CD8-positive, alpha-beta T cell (primary cell): ENCODE measurements at regions of chr18 and their contacts with region 1.

Region 1: GRCh38 chr18:11908182-11909060 is at the start of gene MPPE1:
- DNase-seq: peak; percentile 69 to 93 (median 84)
- ATAC-seq: peak; percentile 90
- H3K4me3 ChIP-seq: peak within 1 kb of the TSS; percentile 85 to 100
- H3K4me3 Mint-ChIP-seq: peak within 1 kb of the TSS; percentile 96
- H3K27ac ChIP-seq: peak within 1 kb of the TSS; percentile 92 to 95
- H3K27ac Mint-ChIP-seq: peak within 1 kb of the TSS; percentile 96
- H3K4me1 ChIP-seq: peaks cover 11% of the 10 kb centered on the region
- H3K4me1 Mint-ChIP-seq: peaks cover 36% of the 10 kb centered on the region
- H3K27me3 ChIP-seq: no peaks in the 10 kb centered on the region
- H3K27me3 Mint-ChIP-seq: no peaks in the 10 kb centered on the region
- CTCF ChIP-seq: no peak
- total RNA-seq, gene MPPE1: 44.0 to 55.1 TPM

Region 2: DNA sequence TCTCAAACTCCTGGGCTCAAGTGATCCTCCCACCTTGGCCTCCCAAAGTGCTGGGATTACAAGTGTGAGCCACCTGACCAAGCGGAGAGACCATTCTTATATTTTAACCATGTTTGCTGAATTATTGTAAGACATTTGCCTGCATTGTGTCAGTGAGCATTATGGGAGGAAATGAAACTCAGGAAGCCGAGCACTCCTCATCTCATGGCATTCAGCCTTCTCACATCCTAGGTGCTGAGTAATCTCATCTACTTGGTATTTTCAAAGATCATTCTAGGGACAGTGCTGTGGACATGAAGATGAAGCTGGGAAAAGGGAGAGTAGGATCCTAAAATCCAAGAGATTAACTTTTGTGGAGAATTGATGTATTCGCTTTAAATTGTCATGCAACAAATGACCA is 1316.5 kb before region 1 on chr18:
- CTCF ChIA-PET with region 1: no interaction called
- POLR2A ChIA-PET with region 1: no interaction called
- intact Hi-C with region 1: loop called in 1 of 2 experiments (anchors 10 kb)
- DNase-seq: no peak
- ATAC-seq: no peak
- H3K4me3 ChIP-seq: no peak overlapping the region
- H3K4me3 Mint-ChIP-seq: no peak overlapping the region
- H3K27ac ChIP-seq: no peak overlapping the region
- H3K27ac Mint-ChIP-seq: no peak overlapping the region
- H3K4me1 ChIP-seq: no peaks in the 10 kb centered on the region
- H3K4me1 Mint-ChIP-seq: no peaks in the 10 kb centered on the region
- H3K27me3 ChIP-seq: peaks cover 0 to 4% of the 10 kb centered on the region in 2 experiments
- H3K27me3 Mint-ChIP-seq: peaks cover 2% of the 10 kb centered on the region
- CTCF ChIP-seq: no peak

Region 3: GRCh38 chr18:11947214-11948191 is 39.1 kb after region 1 on chr18:
- CTCF ChIA-PET with region 1: no interaction called
- POLR2A ChIA-PET with region 1: interaction called, 4 read pairs
- intact Hi-C with region 1: loop called (anchors 1 to 5 kb)
- DNase-seq: peak; percentile 9 to 84 (median 53)
- ATAC-seq: peak; percentile 86
- H3K4me3 ChIP-seq: peak overlapping the region; percentile 57 to 73
- H3K4me3 Mint-ChIP-seq: peak overlapping the region; percentile 86
- H3K27ac ChIP-seq: peak overlapping the region; percentile 36 to 63
- H3K27ac Mint-ChIP-seq: peak overlapping the region; percentile 72
- H3K4me1 ChIP-seq: peaks cover 4% of the 10 kb centered on the region
- H3K4me1 Mint-ChIP-seq: peaks cover 11% of the 10 kb centered on the region
- H3K27me3 ChIP-seq: no peaks in the 10 kb centered on the region
- H3K27me3 Mint-ChIP-seq: no peaks in the 10 kb centered on the region
- CTCF ChIP-seq: no peak

Region 4: GRCh38 chr18:12702221-12703095 is 794.0 kb after region 1 on chr18 and contains the starts of genes CEP76 and PSMG2:
- CTCF ChIA-PET with region 1: no interaction called
- POLR2A ChIA-PET with region 1: no interaction called
- intact Hi-C with region 1: loop called in 1 of 2 experiments (anchors 2 kb)
- DNase-seq: peak; percentile 68 to 91 (median 83)
- ATAC-seq: peak; percentile 78
- H3K4me3 ChIP-seq: peak within 1 kb of the TSS; percentile 70 to 96
- H3K4me3 Mint-ChIP-seq: peak within 1 kb of the TSS; percentile 96
- H3K27ac ChIP-seq: peak within 1 kb of the TSS; percentile 95 to 98
- H3K27ac Mint-ChIP-seq: peak within 1 kb of the TSS; percentile 100
- H3K4me1 ChIP-seq: peaks cover 30% of the 10 kb centered on the region
- H3K4me1 Mint-ChIP-seq: peaks cover 52% of the 10 kb centered on the region
- H3K27me3 ChIP-seq: no peaks in the 10 kb centered on the region
- H3K27me3 Mint-ChIP-seq: no peaks in the 10 kb centered on the region
- CTCF ChIP-seq: no peak
- total RNA-seq, gene CEP76: 10.9 to 11.0 TPM
- total RNA-seq, gene PSMG2: 80.3 to 81.7 TPM